ENCODE measurements at regions of chr19 and their contacts with region 1.

Region 1: GRCh38 chr19:18281082-18282020 is at the start of gene JUND:
- DNase-seq: peak; percentile 99
- ATAC-seq: peak; percentile 73
- H3K4me3 Mint-ChIP-seq: peak within 1 kb of the TSS; percentile 90
- H3K27ac Mint-ChIP-seq: peak within 1 kb of the TSS; percentile 98
- H3K4me1 Mint-ChIP-seq: peaks cover 39% of the 10 kb centered on the region
- H3K27me3 Mint-ChIP-seq: no peaks in the 10 kb centered on the region
- total RNA-seq, gene JUND: 366 to 394 TPM

Region 2: DNA sequence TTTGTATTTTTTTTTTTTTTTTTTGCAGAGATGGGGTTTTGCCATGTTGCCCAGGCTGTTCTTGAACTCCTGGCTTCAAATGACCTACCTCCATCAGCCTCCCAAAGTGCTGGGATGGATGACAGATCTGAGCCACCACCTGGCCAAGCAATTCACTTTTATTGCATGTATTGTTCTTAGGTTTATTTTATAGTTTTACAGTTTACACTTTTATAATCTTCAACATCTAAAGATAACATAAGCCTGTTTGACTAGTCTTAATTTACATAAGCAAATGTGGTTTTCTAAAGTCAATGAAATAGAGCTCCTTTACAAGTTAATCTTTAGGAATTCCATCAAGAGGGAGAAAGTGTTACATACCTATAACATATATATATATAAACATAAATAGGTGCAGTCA is 97.8 kb before region 1 on chr19:
- POLR2A ChIA-PET with region 1: no interaction called
- DNase-seq: no peak
- ATAC-seq: no peak
- H3K4me3 Mint-ChIP-seq: no peak overlapping the region
- H3K27ac Mint-ChIP-seq: no peak overlapping the region
- H3K4me1 Mint-ChIP-seq: no peaks in the 10 kb centered on the region
- H3K27me3 Mint-ChIP-seq: no peaks in the 10 kb centered on the region

Region 3: DNA sequence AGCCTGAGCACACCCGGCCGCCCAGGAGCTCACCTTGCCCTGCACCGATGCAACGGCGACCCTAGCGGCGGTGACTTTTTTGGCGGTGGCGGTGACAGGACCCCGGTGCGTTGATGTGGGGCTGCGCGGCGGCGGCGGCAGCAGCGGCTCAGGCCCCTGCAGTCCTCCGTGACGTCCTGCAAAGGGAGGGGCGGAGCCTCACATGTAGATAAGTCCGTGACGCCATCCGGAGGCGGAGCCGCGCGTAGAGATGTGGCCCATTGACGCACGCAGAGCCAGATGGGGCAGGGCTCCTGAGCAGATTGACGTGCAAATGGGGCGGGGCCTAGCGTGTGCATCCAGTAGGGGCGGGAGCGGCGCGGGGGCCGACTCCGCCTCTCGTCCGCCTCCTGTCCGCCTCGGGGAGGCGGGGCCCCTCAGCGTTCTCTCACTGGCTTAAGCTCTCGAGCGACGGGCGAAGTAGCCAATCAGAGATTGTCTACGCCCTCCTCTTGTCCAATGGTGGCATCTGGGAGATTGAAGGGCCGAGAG is 77.4 kb before region 1 on chr19 and contains the start of gene RAB3A:
- POLR2A ChIA-PET with region 1: interaction called, 42 read pairs
- DNase-seq: peak; percentile 98
- ATAC-seq: peak; percentile 92
- H3K4me3 Mint-ChIP-seq: peak within 1 kb of the TSS; percentile 93
- H3K27ac Mint-ChIP-seq: peak within 1 kb of the TSS; percentile 93
- H3K4me1 Mint-ChIP-seq: peaks cover 11% of the 10 kb centered on the region
- H3K27me3 Mint-ChIP-seq: peaks cover 10% of the 10 kb centered on the region
- total RNA-seq, gene RAB3A: 3.0 to 6.1 TPM

Region 4: DNA sequence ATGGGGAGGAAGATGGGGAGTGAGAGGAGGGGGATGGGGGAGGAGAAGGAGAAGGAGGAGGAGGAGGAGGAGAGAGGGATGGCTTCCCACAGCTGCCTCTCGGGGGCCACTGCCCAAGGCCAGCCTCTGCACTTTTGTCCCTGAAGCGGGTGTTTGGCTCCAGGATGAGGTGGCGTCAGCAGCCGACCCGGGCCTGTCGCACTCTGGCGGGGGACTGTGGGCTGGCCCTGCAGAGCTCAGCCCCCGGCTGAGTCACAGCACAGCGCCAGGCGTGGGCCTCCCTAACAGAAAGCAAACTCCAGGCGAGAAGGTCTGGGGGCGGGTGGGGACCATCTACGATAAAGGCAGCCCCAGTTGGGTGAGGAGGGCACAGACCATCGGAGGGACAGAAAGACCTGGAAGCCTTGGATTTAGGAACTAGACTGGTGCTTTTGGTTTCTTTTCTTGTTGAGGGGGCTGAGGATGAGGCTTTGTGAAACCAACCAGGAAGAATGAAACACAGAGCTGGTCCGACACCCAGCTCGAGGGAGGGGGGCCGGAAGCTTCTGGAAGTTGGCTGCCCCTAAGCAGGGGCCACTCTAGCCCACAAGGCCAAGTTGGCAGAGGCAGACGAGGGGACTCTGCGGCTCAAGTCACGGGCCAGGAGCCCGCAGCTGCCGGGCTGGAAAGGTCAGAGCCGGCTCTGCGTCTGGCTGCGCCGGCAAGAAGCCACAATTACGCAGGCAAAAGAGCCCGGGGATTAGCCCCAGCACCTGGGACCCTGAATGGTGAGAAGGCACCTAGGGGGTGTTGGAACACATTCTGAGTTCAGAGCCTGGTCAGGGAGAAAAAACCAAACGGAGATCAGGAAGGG is 23.3 kb after region 1 on chr19:
- POLR2A ChIA-PET with region 1: interaction called, 1,033 read pairs
- DNase-seq: peak; percentile 82
- ATAC-seq: peak; percentile 75
- H3K4me3 Mint-ChIP-seq: peak overlapping the region; percentile 90
- H3K27ac Mint-ChIP-seq: peak overlapping the region; percentile 93
- H3K4me1 Mint-ChIP-seq: peaks cover 29% of the 10 kb centered on the region
- H3K27me3 Mint-ChIP-seq: no peaks in the 10 kb centered on the region

Region 5: DNA sequence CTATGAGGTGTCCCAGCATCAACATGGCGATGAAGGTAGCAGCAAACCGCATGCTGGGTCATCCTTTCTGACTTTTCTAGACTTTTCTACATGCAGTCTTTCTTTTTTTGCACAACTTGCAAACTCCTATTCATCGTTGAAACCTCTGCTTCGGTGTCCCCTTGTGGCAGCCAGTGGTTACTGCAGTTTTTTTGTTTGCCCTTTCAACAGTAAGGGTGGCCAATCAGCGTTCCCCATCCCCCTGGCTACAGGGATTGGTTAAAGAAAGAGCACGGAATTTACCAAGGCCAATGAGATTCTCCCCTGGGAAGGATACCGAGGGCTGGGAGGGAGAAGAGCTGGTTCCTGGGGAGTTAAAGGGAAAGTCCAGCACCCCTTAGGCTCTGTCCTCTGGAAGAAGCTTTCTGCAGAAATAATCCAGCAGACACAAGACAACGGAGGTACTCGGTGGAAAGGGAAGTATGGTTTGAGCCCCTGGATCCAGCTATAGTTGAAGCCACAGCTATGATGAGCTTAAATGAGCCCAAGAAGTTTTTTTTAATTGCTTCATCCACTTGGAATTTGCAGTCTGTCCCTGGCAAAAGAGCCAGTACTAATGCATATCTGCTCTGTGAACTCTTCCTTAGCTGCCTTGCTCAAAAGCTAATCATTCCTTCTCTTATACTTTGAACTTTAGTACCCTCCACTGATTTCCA is 47.1 kb after region 1 on chr19:
- POLR2A ChIA-PET with region 1: interaction called, 1,033 read pairs
- DNase-seq: peak; percentile 70
- ATAC-seq: peak; percentile 99
- H3K4me3 Mint-ChIP-seq: peak overlapping the region; percentile 68
- H3K27ac Mint-ChIP-seq: peak overlapping the region; percentile 23
- H3K4me1 Mint-ChIP-seq: peaks cover 14% of the 10 kb centered on the region
- H3K27me3 Mint-ChIP-seq: no peaks in the 10 kb centered on the region

Region 6: DNA sequence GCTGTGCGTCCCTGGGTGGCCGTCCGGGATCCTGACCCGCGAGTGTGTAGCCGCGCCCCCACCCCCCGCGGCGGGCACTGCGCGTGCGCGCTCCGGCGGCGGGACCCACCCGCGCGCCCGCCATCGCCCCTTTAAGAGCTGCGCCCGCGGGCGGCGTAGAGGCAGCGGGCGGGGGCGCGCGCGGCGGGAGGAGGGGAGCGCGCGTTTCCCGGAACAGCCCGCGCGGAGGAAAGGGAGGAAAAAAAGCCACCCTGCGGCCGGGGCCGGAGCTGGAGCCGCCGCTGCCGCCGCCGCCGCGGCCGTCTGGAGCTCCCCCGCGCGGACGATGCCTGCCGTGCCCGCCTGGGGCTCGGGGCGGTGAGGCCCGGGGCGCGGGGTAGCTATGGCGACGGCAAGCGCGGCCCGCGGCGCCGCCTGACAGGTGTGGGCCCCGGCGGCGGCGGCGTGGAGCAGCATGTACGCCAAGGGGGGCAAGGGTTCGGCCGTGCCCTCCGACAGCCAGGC is 137.9 kb after region 1 on chr19 and contains the start of gene SSBP4:
- POLR2A ChIA-PET with region 1: interaction called, 103 read pairs
- DNase-seq: peak; percentile 93
- ATAC-seq: peak; percentile 27
- H3K4me3 Mint-ChIP-seq: peak within 1 kb of the TSS; percentile 99
- H3K27ac Mint-ChIP-seq: peak within 1 kb of the TSS; percentile 93
- H3K4me1 Mint-ChIP-seq: peaks cover 68% of the 10 kb centered on the region
- H3K27me3 Mint-ChIP-seq: no peaks in the 10 kb centered on the region
- total RNA-seq, gene SSBP4: 152 to 158 TPM

Measured in activated naive CD8-positive, alpha-beta T cell treated with anti-CD3 and anti-CD28 coated beads, Interleukin-2, amount 10 ng/mL, durations not matched to agents 7 days and 5 days (primary cell).